Transverse colon (tissue), 4 donors: ENCODE measurements at regions of chr17 and their contacts with region 1.

Region 1: DNA sequence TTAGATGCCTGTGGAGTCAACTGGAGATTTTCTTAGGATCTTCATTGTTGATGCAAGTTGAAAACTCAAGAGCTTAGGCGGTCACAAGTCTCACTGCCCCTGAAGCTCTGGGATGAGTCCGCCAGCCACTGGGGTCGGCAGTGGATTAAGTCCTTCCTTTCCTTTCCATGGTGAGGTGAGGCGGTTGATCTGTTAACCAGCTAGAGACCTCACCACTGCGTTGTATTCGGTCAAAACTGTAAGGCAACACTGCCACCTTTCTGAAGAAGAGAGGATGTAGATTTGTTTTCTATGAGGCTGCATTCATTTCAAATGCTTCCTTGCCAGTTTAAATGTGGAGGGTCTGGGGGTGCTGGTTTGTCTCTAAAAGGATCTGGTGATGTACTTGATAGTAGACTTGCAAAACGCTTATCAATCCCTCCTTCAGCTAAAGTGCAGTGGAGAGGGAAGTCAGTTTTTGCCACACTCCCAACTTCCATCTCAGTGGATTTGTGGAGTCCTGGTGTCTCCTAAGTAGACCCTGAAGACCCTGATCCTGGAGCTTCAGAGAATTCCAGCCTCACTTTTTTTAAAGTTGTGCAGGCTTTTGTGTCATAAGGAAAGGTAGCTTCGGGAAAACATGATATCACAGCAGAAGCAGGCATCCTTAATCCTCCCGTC is 1.7 kb downstream of the MYOCD start:
- DNase-seq: peak; percentile 20
- H3K4me3 ChIP-seq: peak overlapping the region; percentile 24 to 69 (median 50)
- H3K27ac ChIP-seq: peak overlapping the region; percentile 80 to 95 (median 88)
- H3K4me1 ChIP-seq: peaks cover 0 to 12% (median 5%) of the 10 kb centered on the region in 4 donors
- H3K27me3 ChIP-seq: peaks cover 38% of the 10 kb centered on the region
- CTCF ChIP-seq: peak; percentile 33 to 62 (median 39)
- EP300 ChIP-seq: no peak
- POLR2A ChIP-seq: no peak

Region 2: DNA sequence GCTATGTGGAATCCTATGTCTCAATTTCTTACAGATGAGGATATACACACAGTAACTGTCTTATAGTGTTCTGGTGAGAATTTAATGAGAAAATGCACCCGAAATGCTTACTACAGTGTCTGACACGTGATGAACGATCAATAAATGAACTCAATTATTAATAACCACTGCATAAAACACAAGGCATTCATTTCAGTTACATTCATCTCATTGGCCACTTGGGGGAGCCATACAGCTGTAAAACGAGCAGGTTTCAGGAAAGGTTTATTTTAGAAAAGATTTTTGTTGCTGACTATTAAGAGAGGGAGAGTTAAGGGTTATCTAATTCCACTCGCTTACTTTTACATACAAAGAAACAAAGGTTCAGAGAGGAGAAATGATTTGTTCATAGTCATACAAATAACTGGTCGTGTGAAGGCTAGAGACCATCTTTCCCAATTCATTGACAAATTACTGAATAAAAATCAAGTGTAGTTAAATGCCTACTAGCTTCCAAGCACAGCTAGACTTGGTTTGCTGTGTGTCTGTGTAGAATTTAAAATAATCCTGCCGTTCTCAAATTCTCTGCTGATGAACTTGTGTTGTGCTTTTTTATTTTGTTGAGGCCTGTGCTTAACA is 486.7 kb before region 1 on chr17:
- in situ Hi-C with region 1: no loop called
- intact Hi-C with region 1: loop called (anchors 10 kb)
- DNase-seq: peak; percentile 11
- H3K4me3 ChIP-seq: no peak overlapping the region
- H3K27ac ChIP-seq: peak overlapping the region in 3 of 4 donors; percentile 9 to 49 (median 39)
- H3K4me1 ChIP-seq: no peaks in the 10 kb centered on the region
- H3K27me3 ChIP-seq: no peaks in the 10 kb centered on the region
- CTCF ChIP-seq: peak; percentile 62 to 73 (median 66)
- EP300 ChIP-seq: no peak
- POLR2A ChIP-seq: no peak

Region 3: GRCh38 chr17:12230481-12231354 is 436.7 kb before region 1 on chr17:
- in situ Hi-C with region 1: loop called in 1 of 4 experiments (anchors 25 kb)
- intact Hi-C with region 1: no loop called
- DNase-seq: no peak
- H3K4me3 ChIP-seq: no peak overlapping the region
- H3K27ac ChIP-seq: peak overlapping the region in 3 of 4 donors; percentile 35 to 70 (median 64)
- H3K4me1 ChIP-seq: peaks cover 0 to 7% (median 1%) of the 10 kb centered on the region in 4 donors
- H3K27me3 ChIP-seq: no peaks in the 10 kb centered on the region
- CTCF ChIP-seq: no peak
- EP300 ChIP-seq: no peak
- POLR2A ChIP-seq: no peak

Region 4: DNA sequence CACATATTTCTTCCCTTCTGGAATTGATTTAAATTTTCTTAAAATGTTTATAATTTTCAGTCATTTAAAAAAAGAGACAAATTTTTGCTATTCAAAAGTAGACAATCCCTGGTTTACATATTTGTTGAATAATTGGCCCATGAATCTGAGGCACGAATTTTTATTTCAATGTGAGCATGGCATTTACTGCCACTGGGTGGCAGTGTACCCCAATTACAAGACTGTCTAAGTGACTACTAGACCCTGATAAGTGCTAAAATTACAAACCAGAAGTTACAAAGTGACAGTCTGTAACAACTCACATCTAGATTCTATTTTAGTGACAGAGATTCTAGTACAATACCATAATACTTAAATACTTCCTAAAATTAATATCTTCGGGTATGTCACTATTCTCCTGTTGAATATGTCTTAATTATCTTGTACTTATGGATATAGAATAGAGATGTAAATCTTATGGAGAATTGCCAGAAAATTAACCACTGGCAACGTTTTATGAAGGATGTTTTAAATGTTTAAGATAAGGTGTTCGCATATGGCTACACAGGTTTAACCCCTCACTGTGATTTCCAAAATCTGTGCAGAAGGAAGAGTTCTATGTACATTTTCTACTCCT is 410.9 kb before region 1 on chr17:
- in situ Hi-C with region 1: loop called in 2 of 4 experiments (anchors 10 to 25 kb)
- intact Hi-C with region 1: loop called (anchors 5 kb)
- DNase-seq: peak; percentile 18
- H3K4me3 ChIP-seq: no peak overlapping the region
- H3K27ac ChIP-seq: peak overlapping the region in 2 of 4 donors; percentile 13 to 29
- H3K4me1 ChIP-seq: no peaks in the 10 kb centered on the region
- H3K27me3 ChIP-seq: no peaks in the 10 kb centered on the region
- CTCF ChIP-seq: peak; percentile 62 to 76 (median 67)
- EP300 ChIP-seq: no peak
- POLR2A ChIP-seq: no peak

Region 5: DNA sequence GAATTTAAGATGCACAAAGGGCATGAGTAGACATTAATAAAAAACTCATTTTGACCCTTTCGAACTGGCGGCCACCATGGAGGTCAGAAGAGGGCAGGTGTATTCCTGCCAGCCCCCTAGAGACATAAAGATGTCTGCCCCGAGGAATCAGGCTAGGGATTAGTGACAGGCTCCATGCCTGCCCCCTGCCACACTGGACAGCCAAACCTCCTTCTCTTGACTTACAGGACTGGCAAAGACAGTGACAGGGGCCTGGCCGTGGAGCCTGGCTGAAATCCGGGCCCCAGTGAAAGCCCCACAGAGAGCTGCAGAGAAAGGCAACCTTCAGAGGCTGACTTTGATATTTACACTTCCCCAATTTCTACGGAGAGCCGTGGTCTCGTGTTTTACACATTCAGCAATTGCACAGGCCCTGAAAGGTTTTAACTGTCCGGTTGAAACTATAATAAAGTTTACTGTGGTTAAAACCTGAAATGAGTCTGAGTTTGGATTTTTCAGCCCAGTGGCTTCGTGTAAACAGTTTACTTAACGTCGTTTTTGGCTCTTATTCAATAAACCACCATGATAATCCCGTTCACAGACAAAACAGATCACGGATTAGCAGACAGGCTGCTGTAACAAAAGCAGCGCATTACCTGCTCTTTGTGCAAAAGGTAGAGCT is 245.7 kb before region 1 on chr17:
- in situ Hi-C with region 1: no loop called
- intact Hi-C with region 1: loop called (anchors 10 kb)
- DNase-seq: no peak
- H3K4me3 ChIP-seq: no peak overlapping the region
- H3K27ac ChIP-seq: peak overlapping the region; percentile 58 to 84 (median 70)
- H3K4me1 ChIP-seq: peaks cover 0 to 8% (median 2%) of the 10 kb centered on the region in 4 donors
- H3K27me3 ChIP-seq: no peaks in the 10 kb centered on the region
- CTCF ChIP-seq: no peak
- EP300 ChIP-seq: no peak
- POLR2A ChIP-seq: no peak

Region 6: GRCh38 chr17:12613566-12613965 is 53.9 kb before region 1 on chr17:
- in situ Hi-C with region 1: no loop called
- intact Hi-C with region 1: no loop called
- DNase-seq: no peak
- H3K4me3 ChIP-seq: no peak overlapping the region
- H3K27ac ChIP-seq: no peak overlapping the region
- H3K4me1 ChIP-seq: no peaks in the 10 kb centered on the region
- H3K27me3 ChIP-seq: no peaks in the 10 kb centered on the region
- CTCF ChIP-seq: no peak
- EP300 ChIP-seq: no peak
- POLR2A ChIP-seq: no peak